ENCODE measurements at regions of chr18 and their contacts with region 1.

Region 1: DNA sequence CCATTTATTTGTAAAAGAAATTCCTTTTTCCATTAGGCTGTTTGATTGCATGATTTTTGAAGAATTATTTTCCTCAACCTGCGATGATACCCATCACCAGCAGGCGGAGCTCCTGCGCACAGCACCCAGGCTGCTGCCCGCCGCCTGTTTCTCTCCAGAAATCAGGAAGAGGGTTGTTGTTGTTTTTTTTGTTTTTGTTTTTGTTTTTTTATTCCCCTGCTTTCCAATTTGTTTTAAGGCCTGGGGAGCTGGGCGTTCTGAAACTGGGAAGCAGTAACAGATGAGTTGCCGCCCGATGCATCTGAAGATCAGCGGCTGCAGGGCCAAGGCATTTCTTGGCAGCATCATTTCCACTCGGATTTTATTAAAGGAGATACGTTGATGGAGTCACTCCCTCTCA is 132.1 kb downstream of the MBP start:
- DNase-seq: peak; percentile 60
- H3K4me3 Mint-ChIP-seq: no peak overlapping the region
- H3K27ac Mint-ChIP-seq: no peak overlapping the region
- H3K4me1 Mint-ChIP-seq: peaks cover 38% of the 10 kb centered on the region
- H3K27me3 Mint-ChIP-seq: peaks cover 5% of the 10 kb centered on the region

Region 2: GRCh38 chr18:76982841-76983587 is 17.5 kb before region 1 on chr18:
- CTCF ChIA-PET with region 1: interaction called, 16 read pairs
- POLR2A ChIA-PET with region 1: interaction called, 4 read pairs
- DNase-seq: peak; percentile 90
- H3K4me3 Mint-ChIP-seq: no peak overlapping the region
- H3K27ac Mint-ChIP-seq: no peak overlapping the region
- H3K4me1 Mint-ChIP-seq: peaks cover 6% of the 10 kb centered on the region
- H3K27me3 Mint-ChIP-seq: no peaks in the 10 kb centered on the region

Region 3: DNA sequence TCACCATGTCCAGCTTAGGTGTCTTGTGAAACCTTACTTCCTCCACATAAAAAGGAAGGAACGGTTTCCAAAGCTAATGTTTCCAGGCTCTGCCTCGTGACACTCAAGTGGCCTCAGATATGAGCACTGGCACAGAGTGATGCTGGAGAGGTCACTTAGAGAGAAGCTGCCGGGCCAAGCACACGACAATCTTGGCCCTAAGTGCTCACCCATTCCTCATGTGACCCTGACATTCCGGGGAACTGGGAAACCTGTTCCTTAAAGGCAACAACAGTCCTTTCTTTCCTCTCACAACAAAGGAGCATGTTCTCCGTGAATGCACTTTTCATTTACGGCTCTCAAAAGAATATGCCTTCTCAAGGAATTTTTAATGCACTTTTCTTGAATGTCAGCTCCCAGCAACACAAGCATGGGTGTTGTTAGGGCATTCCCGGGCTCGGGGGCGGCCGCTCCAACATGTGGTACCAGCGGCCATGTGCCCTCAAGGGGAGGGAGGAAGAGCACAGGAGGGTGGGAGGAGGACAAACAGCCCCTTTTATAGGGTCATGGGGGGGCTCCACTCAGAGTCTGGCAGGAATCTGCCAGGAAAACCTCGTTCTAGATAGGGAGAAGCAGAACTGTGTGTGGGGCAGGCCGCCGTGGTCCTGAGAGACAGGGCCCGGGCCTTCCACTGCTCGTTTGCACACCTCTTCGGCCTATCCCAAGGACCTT is 13.4 kb after region 1 on chr18:
- CTCF ChIA-PET with region 1: interaction called, 10 read pairs
- POLR2A ChIA-PET with region 1: interaction called, 3 read pairs
- DNase-seq: no peak
- H3K4me3 Mint-ChIP-seq: no peak overlapping the region
- H3K27ac Mint-ChIP-seq: no peak overlapping the region
- H3K4me1 Mint-ChIP-seq: peaks cover 5% of the 10 kb centered on the region
- H3K27me3 Mint-ChIP-seq: no peaks in the 10 kb centered on the region

Region 4: DNA sequence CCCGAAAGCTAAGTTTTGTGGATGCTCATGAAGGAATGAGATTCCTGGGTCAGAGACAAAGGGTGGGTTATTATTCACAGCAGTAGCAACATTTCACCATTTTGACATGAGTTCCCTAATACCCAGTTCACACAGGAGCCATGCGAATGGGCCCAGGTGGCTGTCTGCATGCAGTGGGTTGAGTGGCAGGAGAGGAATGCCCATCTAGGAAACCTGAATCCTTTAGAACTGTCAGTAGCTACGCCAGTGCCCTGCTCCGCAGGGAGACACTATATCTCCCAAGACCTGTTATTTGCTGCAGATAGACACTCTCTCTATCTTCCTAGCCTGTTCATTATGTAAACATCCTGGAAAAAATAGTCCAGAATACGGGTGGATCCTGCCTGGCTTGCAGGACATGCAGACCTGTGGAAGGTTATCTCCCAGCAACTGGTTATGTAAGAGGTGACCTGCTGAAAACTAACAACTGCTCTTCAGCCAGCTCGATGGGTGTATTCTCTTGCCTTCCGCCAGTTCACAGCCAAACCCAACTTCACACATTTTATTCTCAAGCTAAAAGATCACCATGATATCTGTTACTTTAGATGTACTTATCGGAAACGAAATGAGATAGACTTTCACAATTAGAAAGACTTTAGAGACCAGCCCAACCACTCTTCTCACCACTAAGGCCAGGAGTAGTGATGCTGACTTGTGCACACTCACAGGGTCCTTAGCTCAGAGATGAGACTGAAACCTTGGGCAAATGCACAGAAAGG is 73.0 kb after region 1 on chr18:
- CTCF ChIA-PET with region 1: interaction called, 10 read pairs
- POLR2A ChIA-PET with region 1: no interaction called
- DNase-seq: peak; percentile 54
- H3K4me3 Mint-ChIP-seq: no peak overlapping the region
- H3K27ac Mint-ChIP-seq: peak overlapping the region; percentile 84
- H3K4me1 Mint-ChIP-seq: peaks cover 86% of the 10 kb centered on the region
- H3K27me3 Mint-ChIP-seq: no peaks in the 10 kb centered on the region

Region 5: GRCh38 chr18:77208964-77209363 is 208.4 kb after region 1 on chr18:
- CTCF ChIA-PET with region 1: interaction called, 70 read pairs
- POLR2A ChIA-PET with region 1: interaction called, 7 read pairs
- DNase-seq: peak; percentile 33
- H3K4me3 Mint-ChIP-seq: peak overlapping the region; percentile 83
- H3K27ac Mint-ChIP-seq: peak overlapping the region; percentile 84
- H3K4me1 Mint-ChIP-seq: peaks cover 50% of the 10 kb centered on the region
- H3K27me3 Mint-ChIP-seq: no peaks in the 10 kb centered on the region